WTC11 (cell line): ENCODE measurements at regions of chr1 and their contacts with region 1.

Region 1: DNA sequence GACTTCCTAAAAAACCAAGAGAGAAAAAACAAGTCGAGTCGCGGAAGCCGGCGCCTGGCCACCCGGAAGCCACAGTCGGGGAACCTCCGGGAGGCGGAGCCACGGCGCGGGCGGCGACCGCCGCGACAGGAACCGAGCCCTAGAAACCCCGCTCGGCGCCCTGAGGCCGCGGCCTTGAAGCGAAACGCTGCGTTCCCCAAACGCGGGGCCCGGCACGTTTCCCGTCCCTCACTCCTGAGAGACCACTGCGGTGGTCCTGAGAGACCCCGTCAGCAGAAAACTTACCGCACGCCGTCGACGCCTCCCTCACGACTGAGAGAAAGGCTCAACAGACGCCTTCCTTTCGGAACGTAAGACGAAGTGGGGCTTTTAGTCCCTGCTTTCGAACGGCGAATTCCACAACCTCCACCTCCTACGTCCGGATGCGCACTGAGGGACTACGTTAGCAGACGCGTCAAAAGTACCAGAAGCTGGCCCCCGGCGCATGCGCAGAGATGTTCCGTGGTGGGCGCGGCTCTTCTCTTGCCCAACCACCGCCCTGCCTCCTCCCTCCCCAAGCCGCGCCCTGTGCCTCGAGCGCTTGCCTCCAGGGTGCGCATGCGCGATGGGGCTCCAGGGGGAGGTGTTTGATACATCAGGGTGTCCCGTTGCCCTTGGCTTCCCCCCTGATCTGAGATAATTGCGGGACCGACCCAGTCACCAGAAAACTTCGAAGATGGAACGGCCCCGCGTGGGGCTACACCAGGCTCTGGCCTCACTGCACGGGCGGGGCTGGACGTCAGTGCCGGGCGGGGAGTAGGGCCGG is at the start of gene RSRP1:
- DNase-seq: peak; percentile 99
- ATAC-seq: peak; percentile 91
- H3K4me3 Mint-ChIP-seq: peak within 1 kb of the TSS; percentile 97
- H3K27ac Mint-ChIP-seq: peak within 1 kb of the TSS; percentile 96
- H3K4me1 Mint-ChIP-seq: peaks cover 22% of the 10 kb centered on the region
- H3K27me3 Mint-ChIP-seq: no peaks in the 10 kb centered on the region
- CTCF ChIP-seq: no peak; the same call in 1 of the 2 replicates
- total RNA-seq, gene RSRP1: 75.9 to 78.1 TPM (median 76.9 TPM) in 3 replicates

Region 2: GRCh38 chr1:25204797-25205480 is 42.3 kb before region 1 on chr1:
- CTCF ChIA-PET with region 1: no interaction called
- POLR2A ChIA-PET with region 1: no interaction called
- DNase-seq: no peak
- ATAC-seq: peak; percentile 57; the same call in 1 of the 2 replicates
- H3K4me3 Mint-ChIP-seq: no peak overlapping the region
- H3K27ac Mint-ChIP-seq: no peak overlapping the region
- H3K4me1 Mint-ChIP-seq: peaks cover 15% of the 10 kb centered on the region
- H3K27me3 Mint-ChIP-seq: no peaks in the 10 kb centered on the region
- CTCF ChIP-seq: peak; percentile 75

Region 3: GRCh38 chr1:25232027-25232865 is 15.0 kb before region 1 on chr1 and contains the start of gene SYF2:
- CTCF ChIA-PET with region 1: interaction called, 11 read pairs
- POLR2A ChIA-PET with region 1: interaction called, 21 read pairs
- DNase-seq: peak; percentile 89
- ATAC-seq: peak; percentile 76
- H3K4me3 Mint-ChIP-seq: no peak within 1 kb of the TSS
- H3K27ac Mint-ChIP-seq: no peak within 1 kb of the TSS; the same call in 1 of the 2 replicates
- H3K4me1 Mint-ChIP-seq: peaks cover 14% of the 10 kb centered on the region
- H3K27me3 Mint-ChIP-seq: no peaks in the 10 kb centered on the region
- CTCF ChIP-seq: no peak
- total RNA-seq, gene SYF2: 30.1 to 35.7 TPM (median 35.3 TPM) in 3 replicates

Region 4: DNA sequence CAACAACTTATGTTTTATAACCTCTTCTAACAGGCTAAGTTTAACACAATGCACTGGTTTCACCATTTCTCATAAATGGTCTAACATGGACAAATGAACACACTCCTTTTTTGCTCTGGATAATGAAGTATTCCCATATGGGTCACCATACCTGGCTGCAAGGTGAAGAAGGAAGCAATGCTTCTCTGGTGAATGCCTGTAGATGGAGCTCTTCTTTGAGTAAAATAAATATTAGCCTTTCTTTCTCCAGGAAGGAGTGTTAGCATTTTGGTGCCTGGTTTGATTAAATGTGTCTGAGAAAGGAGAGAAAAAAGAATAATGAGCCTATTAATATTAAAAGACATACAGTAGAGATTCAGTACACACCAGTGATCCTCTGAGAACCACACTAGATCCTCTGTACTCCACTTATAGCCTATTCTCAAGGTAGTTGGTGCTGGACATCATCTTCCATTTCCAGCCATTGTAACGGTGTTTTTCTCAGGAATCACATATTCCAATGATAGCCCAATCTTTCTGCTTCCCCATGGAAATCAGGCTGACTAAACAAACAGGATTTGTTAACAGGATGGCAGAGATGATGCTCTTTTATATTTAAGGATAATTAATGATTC is 590.1 kb after region 1 on chr1:
- CTCF ChIA-PET with region 1: no interaction called
- POLR2A ChIA-PET with region 1: no interaction called
- DNase-seq: no peak
- ATAC-seq: 0 out of 2 replicates have a peak, but pooled peaks have one; percentile 51
- H3K4me3 Mint-ChIP-seq: no peak overlapping the region
- H3K27ac Mint-ChIP-seq: peak overlapping the region; percentile 2; the same call in 1 of the 2 replicates
- H3K4me1 Mint-ChIP-seq: no peaks in the 10 kb centered on the region
- H3K27me3 Mint-ChIP-seq: no peaks in the 10 kb centered on the region
- CTCF ChIP-seq: no peak